H1 (cell line): ENCODE measurements at regions of chr11 and their contacts with region 1.

Region 1: GRCh38 chr11:62787005-62787759 is at the start of gene TMEM179B:
- DNase-seq: peak; percentile 93 to 98
- H3K4me3 ChIP-seq: peak within 1 kb of the TSS; percentile 77 to 97 (median 90)
- H3K27ac ChIP-seq: peak within 1 kb of the TSS; percentile 90
- H3K4me1 ChIP-seq: peaks cover 0 to 6% (median 2%) of the 10 kb centered on the region in 4 experiments; a peak in 4 of 7 replicates
- H3K27me3 ChIP-seq: no peaks in the 10 kb centered on the region
- CTCF ChIP-seq: peak; percentile 49 to 67 (median 64)
- EP300 ChIP-seq: peak in 1 of 2 experiments; percentile 71; a peak in 1 of 3 replicates
- POLR2A ChIP-seq: peak; percentile 92 to 94
- RAD21 ChIP-seq: peak; percentile 44 to 51
- total RNA-seq, gene TMEM179B: 16.3 and 18.6 TPM in 2 replicates

Region 2: GRCh38 chr11:62694455-62695167 is 92.6 kb before region 1 on chr11:
- CTCF ChIA-PET with region 1: no interaction called
- POLR2A ChIA-PET with region 1: no interaction called
- DNase-seq: peak in 1 of 2 experiments; percentile 87
- H3K4me3 ChIP-seq: no peak overlapping the region
- H3K27ac ChIP-seq: no peak overlapping the region
- H3K4me1 ChIP-seq: no peaks in the 10 kb centered on the region; a peak in 1 of 7 replicates
- H3K27me3 ChIP-seq: no peaks in the 10 kb centered on the region
- CTCF ChIP-seq: peak; percentile 76 to 89 (median 81)
- EP300 ChIP-seq: no peak
- POLR2A ChIP-seq: no peak
- RAD21 ChIP-seq: peak; percentile 72 to 84

Region 3: DNA sequence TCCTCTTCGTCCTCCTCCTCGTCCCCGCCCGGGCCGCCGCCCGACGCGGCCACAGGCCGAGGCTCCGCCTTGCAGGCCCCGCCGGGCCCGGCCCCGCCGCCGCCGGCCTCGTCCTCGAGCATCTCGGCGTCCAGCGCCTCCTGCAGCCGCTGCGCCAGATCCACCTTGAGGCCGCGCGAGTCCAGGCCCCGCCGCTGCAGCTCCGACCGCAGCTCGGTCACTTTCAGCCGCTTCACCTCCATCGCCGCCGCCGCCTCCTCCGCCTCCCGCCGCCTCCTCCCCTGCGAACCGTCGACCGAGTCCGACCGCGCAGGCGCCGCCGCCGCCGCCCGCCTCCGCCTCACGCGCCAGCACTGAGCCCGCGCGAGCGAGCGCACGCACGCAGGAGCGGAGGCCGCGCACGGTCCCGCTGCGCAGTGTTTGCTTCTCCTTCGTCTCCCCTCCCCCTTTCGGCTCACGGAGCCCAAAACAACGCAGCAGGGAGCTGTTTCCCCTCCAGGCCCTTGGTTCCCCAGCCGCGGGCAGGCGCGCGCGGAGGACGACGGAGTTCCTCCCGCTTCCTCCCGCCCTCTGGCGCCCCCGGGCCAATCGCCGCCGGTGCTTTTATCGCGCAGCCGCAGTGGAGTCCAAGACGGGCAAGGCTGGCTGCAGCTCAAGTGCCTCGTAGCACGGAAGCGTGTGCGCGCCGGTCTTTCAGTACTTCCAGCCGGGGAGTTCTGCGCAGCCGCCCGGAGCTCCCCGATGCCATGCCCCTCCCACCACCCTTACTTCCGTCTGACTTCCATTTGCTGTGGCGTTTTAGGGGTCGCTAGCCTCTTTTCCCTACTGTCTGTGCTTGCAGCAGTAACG is 60.0 kb before region 1 on chr11 and contains the start of gene HNRNPUL2:
- CTCF ChIA-PET with region 1: interaction called, 32 read pairs
- POLR2A ChIA-PET with region 1: interaction called, 19 read pairs
- DNase-seq: peak; percentile 94 to 97
- H3K4me3 ChIP-seq: peak within 1 kb of the TSS; percentile 87 to 98 (median 96)
- H3K27ac ChIP-seq: peak within 1 kb of the TSS; percentile 92
- H3K4me1 ChIP-seq: no peaks in the 10 kb centered on the region; a peak in 3 of 7 replicates
- H3K27me3 ChIP-seq: no peaks in the 10 kb centered on the region
- CTCF ChIP-seq: no peak
- EP300 ChIP-seq: 0 out of 3 replicates have a peak, but pooled peaks of 1 of the 2 experiments have one; percentile 25
- POLR2A ChIP-seq: peak; percentile 90
- RAD21 ChIP-seq: no peak
- total RNA-seq, gene HNRNPUL2: 44.3 and 46.4 TPM in 2 replicates

Region 4: DNA sequence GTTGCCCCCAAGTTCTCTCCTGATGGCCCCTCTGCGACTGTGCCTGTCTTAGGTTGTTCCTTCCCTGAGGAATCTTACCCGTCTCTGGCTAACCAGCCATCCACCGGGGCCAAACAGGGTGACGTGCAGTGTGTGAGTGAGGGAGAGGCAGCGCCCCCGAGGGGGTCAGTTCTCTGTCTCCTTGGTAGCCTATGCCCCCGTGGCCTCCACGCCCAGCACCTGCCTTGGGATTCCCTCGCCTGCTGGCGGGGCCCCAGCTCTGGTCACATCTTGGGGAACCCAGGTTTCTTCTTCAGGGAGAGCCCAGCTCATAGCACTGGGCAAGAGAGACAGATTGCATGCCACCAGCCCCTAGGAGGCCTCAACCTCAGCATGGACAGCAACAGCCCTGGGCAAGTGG is 12.3 kb after region 1 on chr11:
- CTCF ChIA-PET with region 1: interaction called, 19 read pairs
- POLR2A ChIA-PET with region 1: interaction called, 251 read pairs
- DNase-seq: no peak
- H3K4me3 ChIP-seq: no peak overlapping the region
- H3K27ac ChIP-seq: no peak overlapping the region
- H3K4me1 ChIP-seq: 0 out of 7 replicates have a peak, but pooled peaks cover 0 to 2% (median 0%) of the 10 kb centered on the region in 4 experiments
- H3K27me3 ChIP-seq: no peaks in the 10 kb centered on the region
- CTCF ChIP-seq: no peak
- EP300 ChIP-seq: no peak
- POLR2A ChIP-seq: no peak
- RAD21 ChIP-seq: no peak

Region 5: DNA sequence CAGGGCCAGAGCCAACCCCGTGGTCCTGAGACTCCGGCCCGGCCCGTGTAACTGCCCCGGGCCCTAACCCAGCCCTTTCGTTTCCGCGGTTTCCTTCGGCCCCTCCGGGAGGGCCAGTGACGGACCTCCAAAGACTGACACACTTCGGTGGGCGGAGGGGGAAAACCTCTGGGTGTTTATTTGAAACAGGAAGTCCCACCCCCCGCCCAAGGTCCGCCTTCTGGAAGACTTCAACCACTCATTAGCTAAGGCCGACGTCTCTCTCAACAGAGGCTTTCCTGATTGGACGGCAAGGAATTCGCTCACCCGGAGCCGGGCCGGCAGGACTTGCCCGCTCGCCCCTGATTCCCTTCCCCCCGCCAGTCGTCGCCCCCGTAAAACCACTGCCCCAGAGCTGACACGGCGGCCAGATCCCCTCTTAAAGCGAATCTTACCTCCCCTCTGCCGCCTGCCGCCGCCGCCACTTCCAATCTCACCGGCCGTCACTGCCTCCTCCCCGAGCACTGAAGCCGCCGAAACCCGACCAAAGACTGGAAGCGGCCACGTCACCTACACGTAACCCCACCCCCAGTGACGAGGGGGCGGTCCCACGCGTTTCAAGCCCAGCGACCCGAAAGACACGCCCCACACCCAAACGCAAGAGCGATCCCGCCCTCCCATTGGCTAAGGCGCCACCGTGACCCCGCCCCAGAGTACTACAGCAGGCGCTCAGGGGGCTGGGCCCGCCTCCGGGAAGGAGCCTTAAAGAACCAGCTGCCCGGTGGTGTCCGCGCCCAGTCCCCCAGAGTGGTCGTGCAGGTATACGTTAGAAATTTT is 44.5 kb after region 1 on chr11 and contains the start of gene STX5:
- CTCF ChIA-PET with region 1: interaction called, 12 read pairs
- POLR2A ChIA-PET with region 1: interaction called, 38 read pairs
- DNase-seq: peak; percentile 96 to 99
- H3K4me3 ChIP-seq: peak within 1 kb of the TSS; percentile 76 to 94 (median 92)
- H3K27ac ChIP-seq: peak within 1 kb of the TSS; percentile 95
- H3K4me1 ChIP-seq: peaks cover 0 to 17% (median 2%) of the 10 kb centered on the region in 4 experiments; a peak in 2 of 7 replicates
- H3K27me3 ChIP-seq: no peaks in the 10 kb centered on the region
- CTCF ChIP-seq: no peak
- EP300 ChIP-seq: no peak
- POLR2A ChIP-seq: peak; percentile 53 to 96; a peak in 2 of 3 replicates
- RAD21 ChIP-seq: no peak
- total RNA-seq, gene STX5: 24.2 and 25.3 TPM in 2 replicates

Region 6: DNA sequence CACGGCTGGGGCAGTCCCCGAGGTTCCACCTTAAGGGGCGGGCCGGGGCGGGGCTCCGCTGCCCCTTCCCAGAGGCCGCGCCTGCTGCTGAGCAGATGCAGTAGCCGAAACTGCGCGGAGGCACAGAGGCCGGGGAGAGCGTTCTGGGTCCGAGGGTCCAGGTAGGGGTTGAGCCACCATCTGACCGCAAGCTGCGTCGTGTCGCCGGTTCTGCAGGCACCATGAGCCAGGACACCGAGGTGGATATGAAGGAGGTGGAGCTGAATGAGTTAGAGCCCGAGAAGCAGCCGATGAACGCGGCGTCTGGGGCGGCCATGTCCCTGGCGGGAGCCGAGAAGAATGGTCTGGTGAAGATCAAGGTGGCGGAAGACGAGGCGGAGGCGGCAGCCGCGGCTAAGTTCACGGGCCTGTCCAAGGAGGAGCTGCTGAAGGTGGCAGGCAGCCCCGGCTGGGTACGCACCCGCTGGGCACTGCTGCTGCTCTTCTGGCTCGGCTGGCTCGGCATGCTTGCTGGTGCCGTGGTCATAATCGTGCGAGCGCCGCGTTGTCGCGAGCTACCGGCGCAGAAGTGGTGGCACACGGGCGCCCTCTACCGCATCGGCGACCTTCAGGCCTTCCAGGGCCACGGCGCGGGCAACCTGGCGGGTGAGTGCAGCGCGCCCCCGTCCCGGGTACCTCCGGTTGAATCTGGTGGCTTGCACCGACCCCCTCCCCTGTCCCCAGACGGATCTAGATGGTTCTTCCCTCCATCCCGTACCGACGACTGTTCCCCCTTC is 93.8 kb after region 1 on chr11 and contains the start of gene SLC3A2:
- CTCF ChIA-PET with region 1: interaction called, 6 read pairs
- POLR2A ChIA-PET with region 1: interaction called, 19 read pairs
- DNase-seq: peak; percentile 56 to 88
- H3K4me3 ChIP-seq: peak within 1 kb of the TSS; percentile 67 to 97 (median 88)
- H3K27ac ChIP-seq: peak within 1 kb of the TSS; percentile 98
- H3K4me1 ChIP-seq: peaks cover 0 to 30% (median 12%) of the 10 kb centered on the region in 4 experiments; a peak in 5 of 7 replicates
- H3K27me3 ChIP-seq: no peaks in the 10 kb centered on the region
- CTCF ChIP-seq: peak; percentile 60 to 82 (median 71)
- EP300 ChIP-seq: no peak
- POLR2A ChIP-seq: peak; percentile 97 to 99
- RAD21 ChIP-seq: peak; percentile 39 to 55
- total RNA-seq, gene SLC3A2: 393 and 410 TPM in 2 replicates